ENCODE measurements at regions of chr2 and their contacts with region 1.

Region 1: GRCh38 chr2:219206442-219207253 is at the start of gene ZFAND2B:
- DNase-seq: peak; percentile 99
- ATAC-seq: peak; percentile 93
- H3K4me3 Mint-ChIP-seq: peak within 1 kb of the TSS; percentile 88
- H3K27ac Mint-ChIP-seq: peak within 1 kb of the TSS; percentile 95
- H3K4me1 Mint-ChIP-seq: peaks cover 26% of the 10 kb centered on the region
- H3K27me3 Mint-ChIP-seq: no peaks in the 10 kb centered on the region
- CTCF ChIP-seq: no peak
- total RNA-seq, gene ZFAND2B: 39.9 and 47.2 TPM in 2 replicates

Region 2: DNA sequence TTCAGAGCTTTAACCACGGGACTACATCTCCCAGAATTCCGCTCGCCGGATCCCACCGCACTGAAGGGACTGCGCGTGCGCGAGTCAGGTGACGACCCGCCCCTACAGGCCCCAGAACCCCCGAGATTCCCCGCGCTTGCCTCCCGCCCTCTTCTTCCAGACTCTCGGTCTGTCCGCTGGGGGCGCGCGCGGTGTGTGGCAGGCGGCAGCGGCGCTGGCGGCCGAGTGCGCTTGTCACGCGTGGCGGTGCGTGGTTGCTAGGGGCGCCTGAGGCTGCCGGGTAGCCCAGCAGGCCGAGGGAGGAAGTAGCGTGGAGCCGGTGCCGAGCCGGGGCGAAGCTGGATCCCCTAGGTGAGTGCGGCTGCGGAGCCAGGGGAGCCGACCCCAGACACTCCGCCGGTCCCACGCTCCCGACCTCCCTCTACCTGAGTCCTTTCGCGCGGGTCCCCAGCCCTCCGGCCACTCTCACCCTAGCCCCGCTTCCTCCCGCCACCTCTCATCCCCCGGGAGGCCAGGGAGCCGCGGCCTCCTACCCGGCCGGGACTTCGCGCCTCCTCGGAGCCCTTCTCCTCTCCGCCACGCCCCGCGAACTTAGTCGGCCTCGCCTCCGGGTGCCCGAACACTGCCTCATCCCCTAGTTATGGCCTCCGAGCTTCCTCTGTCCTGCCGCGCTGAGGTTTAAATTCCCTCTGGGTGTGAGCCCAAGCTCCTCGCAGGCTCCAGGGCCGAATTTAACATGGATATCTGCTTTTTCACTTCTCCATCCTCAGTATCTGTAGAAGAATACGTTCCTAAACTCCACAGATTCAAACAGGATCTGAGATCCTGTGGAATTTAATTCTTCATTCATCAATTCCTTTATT is 495.7 kb before region 1 on chr2 and contains the start of gene TTLL4:
- CTCF ChIA-PET with region 1: no interaction called
- POLR2A ChIA-PET with region 1: interaction called, 3 read pairs
- intact Hi-C with region 1: loop called (anchors 2 kb)
- DNase-seq: peak; percentile 98
- ATAC-seq: peak; percentile 97
- H3K4me3 Mint-ChIP-seq: peak within 1 kb of the TSS; percentile 91
- H3K27ac Mint-ChIP-seq: peak within 1 kb of the TSS; percentile 86
- H3K4me1 Mint-ChIP-seq: peaks cover 26% of the 10 kb centered on the region
- H3K27me3 Mint-ChIP-seq: no peaks in the 10 kb centered on the region
- CTCF ChIP-seq: no peak
- total RNA-seq, gene TTLL4: 36.0 and 37.2 TPM in 2 replicates

Region 3: GRCh38 chr2:219037783-219038499 is 168.7 kb before region 1 on chr2:
- CTCF ChIA-PET with region 1: no interaction called
- POLR2A ChIA-PET with region 1: no interaction called
- intact Hi-C with region 1: no loop called
- DNase-seq: no peak
- ATAC-seq: no peak
- H3K4me3 Mint-ChIP-seq: no peak overlapping the region
- H3K27ac Mint-ChIP-seq: no peak overlapping the region
- H3K4me1 Mint-ChIP-seq: peaks cover 7% of the 10 kb centered on the region
- H3K27me3 Mint-ChIP-seq: peaks cover 56% of the 10 kb centered on the region
- CTCF ChIP-seq: no peak

Region 4: DNA sequence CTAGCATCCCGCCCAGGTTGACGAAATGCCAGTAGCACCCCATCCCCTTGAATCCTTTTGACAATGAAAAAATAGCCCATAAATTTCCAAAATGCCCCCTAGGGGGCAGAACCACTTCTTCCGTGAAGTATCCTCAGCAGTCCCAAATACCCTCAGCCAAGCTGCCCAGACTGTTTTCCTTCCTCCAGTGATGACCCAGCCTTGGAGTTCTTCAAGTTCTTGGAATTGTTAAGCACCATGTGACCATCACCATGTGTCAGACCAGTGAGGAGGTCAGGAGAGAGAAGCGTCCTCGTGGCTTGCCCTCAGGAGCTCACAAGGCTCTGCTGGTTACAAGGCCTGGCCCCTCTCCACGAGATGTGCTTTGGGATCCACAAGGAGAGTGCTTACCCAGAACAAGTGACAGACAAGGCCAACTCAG is 35.4 kb before region 1 on chr2:
- CTCF ChIA-PET with region 1: interaction called, 14 read pairs
- POLR2A ChIA-PET with region 1: interaction called, 98 read pairs
- intact Hi-C with region 1: loop called (anchors 1 kb)
- DNase-seq: no peak
- ATAC-seq: peak; percentile 40
- H3K4me3 Mint-ChIP-seq: no peak overlapping the region
- H3K27ac Mint-ChIP-seq: no peak overlapping the region
- H3K4me1 Mint-ChIP-seq: peaks cover 21% of the 10 kb centered on the region
- H3K27me3 Mint-ChIP-seq: no peaks in the 10 kb centered on the region
- CTCF ChIP-seq: no peak

Region 5: DNA sequence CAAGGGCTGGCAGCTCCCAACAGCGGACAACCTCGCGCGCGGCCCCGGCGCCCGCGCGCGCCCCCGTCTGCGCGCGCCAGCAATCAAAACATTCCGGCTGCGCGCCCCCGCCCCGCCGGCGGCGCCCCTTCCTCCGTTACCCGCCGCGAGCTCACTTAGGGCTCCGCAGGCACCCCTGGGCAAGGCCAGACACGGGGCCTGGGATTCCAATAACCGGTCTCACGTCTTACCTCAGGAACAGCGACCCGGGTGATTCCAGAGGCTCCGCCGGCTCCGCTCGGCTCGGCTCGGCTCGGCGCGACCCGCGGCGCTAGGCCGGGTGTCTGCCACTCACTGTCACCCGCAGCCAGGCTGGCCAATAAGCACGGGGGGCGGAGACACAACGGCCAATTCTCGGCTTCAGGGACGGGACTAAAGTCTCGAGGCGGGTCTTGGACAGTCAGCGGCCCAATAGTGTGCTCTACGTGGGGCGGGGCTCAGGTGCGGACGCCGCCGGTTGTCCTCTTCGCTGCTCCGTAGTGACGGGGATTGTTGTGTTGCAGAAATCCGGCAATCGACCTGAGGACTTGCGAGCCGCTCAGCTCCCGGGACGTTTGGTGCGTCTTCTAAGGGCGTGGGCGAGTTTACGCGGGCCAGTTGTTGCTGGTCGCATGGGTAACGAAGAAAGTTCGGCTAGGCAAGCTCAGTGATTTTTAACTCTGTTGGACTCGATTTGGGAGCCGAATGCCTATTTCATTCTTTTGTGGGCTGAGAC is 22.8 kb after region 1 on chr2 and contains the starts of genes ANKZF1 and ATG9A:
- CTCF ChIA-PET with region 1: interaction called, 4 read pairs
- POLR2A ChIA-PET with region 1: interaction called, 28 read pairs
- intact Hi-C with region 1: loop called (anchors 1 kb)
- DNase-seq: peak; percentile 90
- ATAC-seq: peak; percentile 97
- H3K4me3 Mint-ChIP-seq: peak within 1 kb of the TSS; percentile 96
- H3K27ac Mint-ChIP-seq: peak within 1 kb of the TSS; percentile 95
- H3K4me1 Mint-ChIP-seq: peaks cover 43% of the 10 kb centered on the region
- H3K27me3 Mint-ChIP-seq: no peaks in the 10 kb centered on the region
- CTCF ChIP-seq: no peak
- total RNA-seq, gene ANKZF1: 96.0 and 105 TPM in 2 replicates
- total RNA-seq, gene ATG9A: 28.3 and 38.3 TPM in 2 replicates

Region 6: GRCh38 chr2:219253753-219254590 is 47.3 kb after region 1 on chr2 and contains the start of gene TUBA4A:
- CTCF ChIA-PET with region 1: interaction called, 4 read pairs
- POLR2A ChIA-PET with region 1: interaction called, 48 read pairs
- intact Hi-C with region 1: loop called (anchors 1 kb)
- DNase-seq: peak; percentile 90
- ATAC-seq: peak; percentile 69
- H3K4me3 Mint-ChIP-seq: peak within 1 kb of the TSS; percentile 82
- H3K27ac Mint-ChIP-seq: peak within 1 kb of the TSS; percentile 98
- H3K4me1 Mint-ChIP-seq: peaks cover 53% of the 10 kb centered on the region
- H3K27me3 Mint-ChIP-seq: no peaks in the 10 kb centered on the region
- CTCF ChIP-seq: no peak
- total RNA-seq, gene TUBA4A: 184 and 192 TPM in 2 replicates

Region 7: GRCh38 chr2:219722349-219722776 is 515.7 kb after region 1 on chr2:
- CTCF ChIA-PET with region 1: no interaction called
- POLR2A ChIA-PET with region 1: no interaction called
- intact Hi-C with region 1: no loop called
- DNase-seq: no peak
- ATAC-seq: no peak
- H3K4me3 Mint-ChIP-seq: no peak overlapping the region
- H3K27ac Mint-ChIP-seq: no peak overlapping the region
- H3K4me1 Mint-ChIP-seq: no peaks in the 10 kb centered on the region
- H3K27me3 Mint-ChIP-seq: peaks cover 6% of the 10 kb centered on the region
- CTCF ChIP-seq: no peak

Measured in activated B cell treated with CpG ODN at 0.5 μM for 24 hours (primary cell).